Calu3 (cell line): ENCODE measurements at regions of chr3 and their contacts with region 1.

Region 1: DNA sequence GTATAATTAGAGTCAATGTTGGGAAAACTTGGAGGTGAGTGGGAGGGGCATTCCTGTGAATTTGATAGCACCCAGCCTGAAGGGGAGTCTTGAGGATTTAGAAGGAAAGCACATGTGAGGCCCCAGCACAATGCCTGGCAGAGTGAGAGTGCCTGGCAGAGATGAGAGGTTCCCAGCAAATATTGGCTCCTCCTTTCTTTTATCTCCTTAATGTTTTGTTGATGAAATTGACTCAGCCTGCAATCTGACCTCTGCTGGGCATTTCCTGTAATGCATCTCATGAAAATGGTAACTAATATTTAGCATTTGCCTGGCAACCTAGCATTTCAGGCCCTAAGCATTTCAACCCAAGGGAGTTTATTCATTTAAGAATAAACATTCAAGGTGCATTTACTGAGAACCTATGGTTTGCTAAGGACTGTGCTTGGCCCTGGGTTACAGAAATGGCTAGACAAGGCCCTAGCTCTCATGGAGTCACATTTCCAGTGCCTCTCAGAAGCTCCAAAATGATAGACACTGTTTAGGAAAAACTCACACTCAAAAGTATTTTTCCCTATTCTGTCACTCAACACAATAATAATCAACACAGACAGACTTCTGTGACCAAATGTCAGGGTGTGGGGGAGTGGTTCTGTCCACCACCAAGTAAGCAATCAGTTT is 19.0 kb downstream of the PDHB start:
- DNase-seq: peak; percentile 49
- H3K4me3 Mint-ChIP-seq: no peak overlapping the region
- H3K27ac Mint-ChIP-seq: no peak overlapping the region
- H3K4me1 Mint-ChIP-seq: no peaks in the 10 kb centered on the region
- H3K27me3 Mint-ChIP-seq: no peaks in the 10 kb centered on the region
- CTCF ChIP-seq: peak; percentile 37

Region 2: DNA sequence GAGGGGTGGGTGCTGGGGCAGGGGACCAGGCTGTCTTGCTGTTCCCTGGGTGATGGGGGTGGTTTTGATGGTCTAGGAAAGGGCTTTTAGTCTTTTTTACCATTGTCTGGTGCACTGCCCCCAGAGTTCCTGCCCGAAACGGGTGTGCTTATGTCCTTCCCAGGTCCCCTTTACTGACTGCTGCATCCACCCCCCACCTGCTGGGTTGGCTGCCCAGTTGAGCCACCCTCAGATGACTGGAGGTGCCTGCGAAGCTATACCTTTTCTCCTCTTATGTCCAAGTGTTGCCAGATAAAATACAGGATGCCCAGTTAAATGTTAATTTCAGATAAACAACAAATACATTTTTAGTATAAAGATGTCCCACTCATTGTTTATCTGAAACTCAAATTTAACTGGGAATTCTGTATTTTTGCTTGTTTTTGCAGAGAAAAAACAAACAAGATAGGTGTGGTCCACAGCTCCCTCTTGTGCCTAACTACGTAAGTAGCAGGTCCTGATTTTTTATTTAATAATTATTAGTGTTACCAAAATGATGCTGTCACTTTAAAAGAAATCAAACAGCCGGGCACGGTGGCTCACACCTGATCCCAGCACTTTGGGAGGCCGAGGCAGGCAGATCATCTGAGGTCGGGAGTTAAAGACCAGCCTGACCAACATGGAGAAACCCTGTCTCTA is 114.7 kb before region 1 on chr3:
- CTCF ChIA-PET with region 1: no interaction called
- intact Hi-C with region 1: no loop called
- DNase-seq: peak; percentile 14
- H3K4me3 Mint-ChIP-seq: no peak overlapping the region
- H3K27ac Mint-ChIP-seq: no peak overlapping the region
- H3K4me1 Mint-ChIP-seq: no peaks in the 10 kb centered on the region
- H3K27me3 Mint-ChIP-seq: peaks cover 21% of the 10 kb centered on the region
- CTCF ChIP-seq: peak; percentile 30

Region 3: GRCh38 chr3:58332575-58333188 is 82.0 kb before region 1 on chr3 and contains the start of gene PXK:
- CTCF ChIA-PET with region 1: no interaction called
- intact Hi-C with region 1: loop called (anchors 1 kb)
- DNase-seq: peak; percentile 81
- H3K4me3 Mint-ChIP-seq: peak within 1 kb of the TSS; percentile 92
- H3K27ac Mint-ChIP-seq: no peak within 1 kb of the TSS
- H3K4me1 Mint-ChIP-seq: peaks cover 9% of the 10 kb centered on the region
- H3K27me3 Mint-ChIP-seq: no peaks in the 10 kb centered on the region
- CTCF ChIP-seq: no peak
- total RNA-seq, gene PXK: 8.6 and 10.8 TPM in 2 replicates